ENCODE measurements at regions of chr12 and their contacts with region 1.

Region 1: GRCh38 chr12:121626087-121626852 is at the start of gene ORAI1:
- DNase-seq: peak; percentile 98 to 99 (median 99)
- ATAC-seq: peak; percentile 94 to 96
- H3K4me3 ChIP-seq: peak within 1 kb of the TSS; percentile 73
- H3K27ac ChIP-seq: peak within 1 kb of the TSS; percentile 87
- H3K4me1 ChIP-seq: peaks cover 4% of the 10 kb centered on the region
- H3K27me3 ChIP-seq: no peaks in the 10 kb centered on the region
- total RNA-seq, gene ORAI1: 7.0 to 9.4 (median 8.4) TPM

Region 2: GRCh38 chr12:121499929-121500793 is 126.1 kb before region 1 on chr12:
- intact Hi-C with region 1: loop called in 1 of 4 experiments (anchors 10 kb)
- DNase-seq: peak; percentile 80 to 93 (median 93)
- ATAC-seq: peak; percentile 84 to 85
- H3K4me3 ChIP-seq: peak overlapping the region; percentile 19
- H3K27ac ChIP-seq: peak overlapping the region; percentile 88
- H3K4me1 ChIP-seq: no peaks in the 10 kb centered on the region
- H3K27me3 ChIP-seq: no peaks in the 10 kb centered on the region

Region 3: DNA sequence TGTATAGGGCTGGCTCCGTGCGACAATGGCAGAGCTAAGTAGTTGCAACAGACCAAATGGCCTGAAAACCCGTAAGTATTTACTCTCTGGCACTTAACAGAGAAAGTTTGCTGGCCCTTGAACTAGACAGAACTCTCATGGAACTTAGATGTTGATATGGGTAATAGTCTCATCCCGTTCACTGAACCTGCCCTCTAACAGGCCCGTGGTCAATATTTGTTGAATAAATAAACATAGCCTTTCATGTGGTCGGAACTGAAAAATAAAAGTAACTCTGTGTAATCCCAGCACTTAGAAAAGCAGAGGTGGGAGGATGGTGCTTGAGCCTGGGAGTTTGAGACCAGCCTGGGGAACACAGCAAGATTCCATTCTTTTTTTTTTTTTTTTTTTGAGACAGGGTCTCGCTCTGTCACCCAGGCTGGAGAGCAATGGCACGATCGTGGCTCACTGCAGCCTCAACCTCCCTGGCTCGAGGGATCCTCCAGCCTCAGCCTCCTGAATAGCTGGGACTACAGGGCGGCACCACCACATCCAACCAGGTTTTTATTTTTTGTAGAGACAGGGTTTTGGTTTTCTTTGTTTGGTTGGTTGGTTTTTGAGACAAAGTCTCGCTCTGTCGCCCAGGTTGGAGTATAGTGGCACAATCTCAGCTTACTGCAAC is 75.2 kb before region 1 on chr12:
- intact Hi-C with region 1: loop called in 3 of 4 experiments (anchors 5 to 10 kb)
- DNase-seq: no peak
- ATAC-seq: no peak
- H3K4me3 ChIP-seq: no peak overlapping the region
- H3K27ac ChIP-seq: no peak overlapping the region
- H3K4me1 ChIP-seq: no peaks in the 10 kb centered on the region
- H3K27me3 ChIP-seq: no peaks in the 10 kb centered on the region

Region 4: GRCh38 chr12:121579981-121580868 is 46.0 kb before region 1 on chr12:
- intact Hi-C with region 1: loop called in 1 of 4 experiments (anchors 5 kb)
- DNase-seq: peak; percentile 70 to 90 (median 89)
- ATAC-seq: peak; percentile 58 to 63
- H3K4me3 ChIP-seq: peak overlapping the region; percentile 98
- H3K27ac ChIP-seq: peak overlapping the region; percentile 60
- H3K4me1 ChIP-seq: peaks cover 9% of the 10 kb centered on the region
- H3K27me3 ChIP-seq: no peaks in the 10 kb centered on the region

Region 5: GRCh38 chr12:121668750-121669520 is 42.7 kb after region 1 on chr12:
- intact Hi-C with region 1: loop called in 1 of 4 experiments (anchors 5 kb)
- DNase-seq: peak in 1 of 3 donors; percentile 67
- ATAC-seq: no peak
- H3K4me3 ChIP-seq: no peak overlapping the region
- H3K27ac ChIP-seq: no peak overlapping the region
- H3K4me1 ChIP-seq: peaks cover 2% of the 10 kb centered on the region
- H3K27me3 ChIP-seq: no peaks in the 10 kb centered on the region

Region 6: DNA sequence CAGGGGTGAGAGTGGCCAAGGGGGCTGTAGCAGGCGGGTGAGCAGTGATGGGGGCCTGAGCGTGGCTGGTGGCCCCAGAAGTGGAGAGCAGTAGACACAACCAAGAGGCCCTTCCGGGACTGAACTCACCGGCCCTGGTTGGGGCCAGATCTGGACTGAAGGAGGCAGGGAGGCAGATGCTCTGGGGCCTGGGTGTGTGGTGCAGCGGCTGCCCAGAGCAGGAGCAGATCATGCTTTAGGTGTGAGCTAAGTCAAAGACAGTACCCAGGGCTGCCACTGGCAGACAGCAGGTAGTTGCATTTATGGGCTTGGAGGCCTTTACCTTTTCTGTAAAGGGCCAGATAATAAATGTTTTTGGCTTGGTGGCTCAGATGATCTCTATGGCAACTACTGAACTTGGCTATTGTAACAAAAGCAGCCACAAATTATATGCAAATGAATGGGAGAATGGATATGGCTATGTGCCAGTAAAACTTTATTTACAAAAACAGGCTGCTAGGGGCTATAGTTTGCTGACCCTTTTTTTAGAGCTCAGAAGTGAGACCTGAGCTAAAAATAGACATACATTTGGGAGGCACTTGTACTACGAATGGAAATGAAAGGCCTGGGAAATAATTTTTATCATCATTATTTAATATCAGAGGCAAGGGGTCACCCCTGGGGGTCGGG is 203.1 kb after region 1 on chr12:
- intact Hi-C with region 1: no loop called
- DNase-seq: no peak
- ATAC-seq: no peak
- H3K4me3 ChIP-seq: no peak overlapping the region
- H3K27ac ChIP-seq: no peak overlapping the region
- H3K4me1 ChIP-seq: no peaks in the 10 kb centered on the region
- H3K27me3 ChIP-seq: no peaks in the 10 kb centered on the region